PC-9 (cell line): ENCODE measurements at regions of chr3 and their contacts with region 1.

Region 1: GRCh38 chr3:183548262-183548769 is 7.2 kb downstream of the KLHL6 start:
- DNase-seq: peak; percentile 75 to 77
- H3K4me3 ChIP-seq: no peak overlapping the region
- H3K27ac ChIP-seq: no peak overlapping the region
- H3K4me1 ChIP-seq: no peaks in the 10 kb centered on the region
- H3K27me3 ChIP-seq: no peaks in the 10 kb centered on the region
- CTCF ChIP-seq: no peak

Region 2: DNA sequence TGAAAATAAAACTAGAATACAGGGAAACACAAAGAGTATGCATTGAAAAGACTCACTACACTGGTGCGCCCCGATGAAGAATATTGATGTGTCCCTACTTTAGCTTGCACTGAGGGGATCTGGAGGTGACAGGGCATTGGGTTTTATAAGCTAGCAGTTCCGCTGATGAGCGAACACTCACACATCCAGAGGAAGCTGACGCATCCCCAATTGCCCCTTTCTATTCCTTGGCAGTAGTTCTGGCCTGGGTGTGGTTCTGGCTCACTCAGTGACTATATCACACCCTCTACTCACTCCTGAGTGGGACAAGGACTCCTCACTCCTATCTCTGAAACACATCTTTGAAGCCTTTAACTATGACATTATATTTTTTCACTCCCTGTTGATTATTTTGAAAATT is 224.2 kb before region 1 on chr3:
- CTCF ChIA-PET with region 1: no interaction called
- POLR2A ChIA-PET with region 1: no interaction called
- intact Hi-C with region 1: no loop called
- DNase-seq: no peak
- H3K4me3 ChIP-seq: no peak overlapping the region
- H3K27ac ChIP-seq: no peak overlapping the region
- H3K4me1 ChIP-seq: peaks cover 31% of the 10 kb centered on the region
- H3K27me3 ChIP-seq: no peaks in the 10 kb centered on the region
- CTCF ChIP-seq: no peak

Region 3: DNA sequence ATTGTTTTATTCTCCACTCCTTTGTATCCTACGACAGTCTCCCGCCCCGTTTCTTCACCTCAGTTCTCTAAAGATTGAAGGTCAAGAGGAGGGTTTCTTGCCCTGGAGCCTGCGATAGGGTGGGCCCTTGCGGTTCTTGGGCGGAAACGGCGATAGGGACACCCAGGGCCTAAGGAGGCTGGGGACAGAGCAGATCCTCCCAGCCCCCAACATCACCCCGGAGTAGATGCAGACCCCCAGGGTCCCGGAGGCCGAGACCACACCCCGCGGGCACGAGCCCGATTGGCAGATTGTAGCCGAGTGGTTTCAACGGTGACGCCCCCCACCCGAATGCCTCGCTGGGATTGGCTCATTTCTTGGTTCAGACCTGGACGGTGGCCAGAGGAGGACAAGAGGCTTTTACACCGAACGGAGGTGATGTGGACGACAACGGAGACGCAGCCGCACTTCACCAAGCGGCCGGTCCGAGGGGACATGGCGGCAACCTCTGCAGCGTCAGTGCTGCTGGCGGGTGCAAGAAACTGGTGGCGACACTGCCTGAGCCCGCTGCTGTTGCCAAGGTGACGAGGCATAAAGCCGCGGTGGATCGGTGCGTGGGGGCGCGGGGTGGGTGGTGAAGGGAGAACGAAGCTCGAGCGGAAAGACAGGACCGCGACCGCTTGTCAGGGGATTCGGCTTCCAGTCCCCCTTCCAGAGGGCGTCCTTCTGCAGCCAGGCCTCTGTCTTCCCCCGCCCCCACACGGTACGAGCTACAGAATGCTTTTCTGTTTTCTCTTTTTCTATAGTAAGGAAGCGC is 100.9 kb before region 1 on chr3:
- CTCF ChIA-PET with region 1: no interaction called
- POLR2A ChIA-PET with region 1: no interaction called
- intact Hi-C with region 1: no loop called
- DNase-seq: peak; percentile 82 to 91
- H3K4me3 ChIP-seq: peak overlapping the region; percentile 88
- H3K27ac ChIP-seq: no peak overlapping the region
- H3K4me1 ChIP-seq: peaks cover 20% of the 10 kb centered on the region
- H3K27me3 ChIP-seq: no peaks in the 10 kb centered on the region
- CTCF ChIP-seq: no peak

Region 4: DNA sequence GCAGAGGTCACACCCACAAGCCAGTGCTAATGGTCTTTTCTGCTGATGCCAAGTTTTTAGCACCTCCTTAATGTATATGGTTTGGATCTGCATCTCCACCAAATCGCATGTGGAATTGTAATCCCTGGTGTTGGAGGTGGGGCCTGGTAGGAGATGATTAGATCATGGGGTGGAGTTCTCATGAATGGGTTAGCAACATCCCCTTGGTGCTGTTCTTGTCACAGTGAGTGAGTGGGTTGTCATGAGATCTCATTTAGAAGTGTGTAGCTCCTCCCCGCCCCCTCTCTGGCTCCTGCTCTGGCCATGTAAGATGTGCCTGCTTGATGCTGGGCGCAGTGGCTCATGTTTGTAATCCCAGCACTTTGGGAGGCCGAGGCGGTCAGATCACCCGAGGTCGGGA is 44.5 kb after region 1 on chr3:
- CTCF ChIA-PET with region 1: interaction called, 18 read pairs
- POLR2A ChIA-PET with region 1: no interaction called
- intact Hi-C with region 1: no loop called
- DNase-seq: no peak
- H3K4me3 ChIP-seq: no peak overlapping the region
- H3K27ac ChIP-seq: no peak overlapping the region
- H3K4me1 ChIP-seq: no peaks in the 10 kb centered on the region
- H3K27me3 ChIP-seq: no peaks in the 10 kb centered on the region
- CTCF ChIP-seq: no peak; the same call in 1 of the 2 replicates

Region 5: GRCh38 chr3:183635431-183636220 is 87.3 kb after region 1 on chr3 and contains the start of gene KLHL24:
- CTCF ChIA-PET with region 1: no interaction called
- POLR2A ChIA-PET with region 1: no interaction called
- intact Hi-C with region 1: loop called (anchors 1 kb)
- DNase-seq: peak; percentile 91 to 96
- H3K4me3 ChIP-seq: peak within 1 kb of the TSS; percentile 85
- H3K27ac ChIP-seq: peak within 1 kb of the TSS; percentile 50
- H3K4me1 ChIP-seq: peaks cover 9% of the 10 kb centered on the region
- H3K27me3 ChIP-seq: no peaks in the 10 kb centered on the region
- CTCF ChIP-seq: peak; percentile 44; the same call in 1 of the 2 replicates
- total RNA-seq, gene KLHL24: 59.1 and 73.0 TPM in 2 replicates